AG04449 (cell line): ENCODE measurements at regions of chr14 and their contacts with region 1.

Region 1: DNA sequence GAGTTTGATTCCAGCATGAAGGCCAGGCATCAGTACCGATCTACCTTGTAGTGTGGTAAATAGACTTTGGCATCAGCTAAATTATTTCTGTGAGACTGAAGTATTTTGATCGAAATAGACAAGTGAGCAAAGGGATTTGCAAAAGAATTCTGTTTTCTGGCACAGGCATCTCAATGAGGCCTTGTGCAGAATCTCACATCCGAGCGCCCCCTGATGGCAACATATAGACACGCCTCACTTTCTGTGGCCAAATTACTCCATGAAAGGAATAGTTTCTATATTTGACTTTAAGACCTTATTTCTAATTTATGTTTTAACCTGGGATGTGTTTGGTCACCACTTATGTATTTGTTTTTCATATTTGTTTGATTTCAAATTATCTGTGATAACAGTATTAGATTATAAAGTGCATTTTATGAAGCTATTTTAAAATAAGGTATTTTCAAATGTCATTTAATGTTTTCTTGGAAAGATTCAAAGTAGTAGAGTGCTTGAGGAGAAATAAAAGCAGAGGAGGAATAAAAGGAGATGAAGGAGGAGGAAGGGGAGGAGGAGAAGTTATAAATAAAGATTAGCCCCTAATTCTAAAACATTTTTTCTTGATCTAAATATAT is 731.9 kb downstream of the NRXN3 start:
- DNase-seq: peak; percentile 9
- H3K4me3 ChIP-seq: no peak overlapping the region
- CTCF ChIP-seq: peak; percentile 61

Region 2: DNA sequence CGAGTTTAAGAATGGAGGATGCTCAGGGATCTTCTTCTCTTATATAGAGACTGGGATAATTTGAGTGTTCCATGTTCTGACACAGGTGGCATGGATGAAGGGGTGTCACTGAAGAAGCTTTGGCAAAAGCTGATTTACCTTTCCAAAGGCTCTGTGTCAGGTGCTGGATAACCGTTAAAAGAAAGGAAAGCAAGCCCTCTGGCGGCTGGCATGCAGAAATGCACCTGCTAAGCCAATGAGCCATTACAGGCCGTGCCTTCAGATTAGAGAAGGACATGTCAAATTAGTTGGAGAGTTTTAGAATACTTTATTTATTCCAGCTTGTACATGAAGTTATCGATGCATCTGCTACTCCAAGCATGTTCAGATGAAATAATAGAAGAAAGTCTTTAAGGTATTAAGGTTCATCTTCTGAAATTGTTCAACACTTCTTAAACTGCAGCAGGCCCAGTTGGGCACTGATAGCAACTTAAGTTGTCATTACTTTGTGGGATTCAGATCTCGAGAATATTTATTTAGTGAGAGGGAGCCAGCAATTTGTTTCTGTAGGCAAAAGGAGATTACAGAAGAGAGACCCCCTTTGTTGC is 53.8 kb before region 1 on chr14:
- CTCF ChIA-PET with region 1: interaction called, 12 read pairs
- POLR2A ChIA-PET with region 1: no interaction called
- DNase-seq: no peak
- H3K4me3 ChIP-seq: no peak overlapping the region
- CTCF ChIP-seq: peak; percentile 80

Region 3: DNA sequence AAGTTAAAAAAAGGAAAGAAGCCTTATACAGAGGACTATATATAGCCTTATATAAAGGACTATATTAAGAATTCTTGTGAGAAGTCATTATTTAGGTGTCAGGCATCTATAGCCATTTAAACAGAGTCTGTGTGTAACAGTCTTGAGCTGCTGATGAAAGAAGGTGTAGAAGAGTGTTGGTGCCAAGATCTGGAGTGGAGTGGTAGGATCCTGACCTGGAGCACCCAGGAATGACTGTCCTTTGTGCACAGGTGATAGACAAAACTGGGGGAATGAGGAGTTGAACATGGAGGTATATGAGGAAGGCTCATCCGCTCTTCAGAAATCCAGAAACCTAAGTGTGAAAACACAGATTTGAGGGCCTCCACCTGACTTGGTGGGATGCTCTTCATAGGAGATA is 15.3 kb after region 1 on chr14:
- CTCF ChIA-PET with region 1: interaction called, 11 read pairs
- POLR2A ChIA-PET with region 1: no interaction called
- DNase-seq: no peak
- H3K4me3 ChIP-seq: no peak overlapping the region
- CTCF ChIP-seq: no peak